Right ventricle myocardium superior (tissue), 1 donor: ENCODE measurements at regions of chr6 and their contacts with region 1.

Region 1: GRCh38 chr6:39302669-39303424 is 11.4 kb downstream of the KCNK17 start:
- DNase-seq: peak; percentile 91
- ATAC-seq: peak; percentile 96

Region 2: DNA sequence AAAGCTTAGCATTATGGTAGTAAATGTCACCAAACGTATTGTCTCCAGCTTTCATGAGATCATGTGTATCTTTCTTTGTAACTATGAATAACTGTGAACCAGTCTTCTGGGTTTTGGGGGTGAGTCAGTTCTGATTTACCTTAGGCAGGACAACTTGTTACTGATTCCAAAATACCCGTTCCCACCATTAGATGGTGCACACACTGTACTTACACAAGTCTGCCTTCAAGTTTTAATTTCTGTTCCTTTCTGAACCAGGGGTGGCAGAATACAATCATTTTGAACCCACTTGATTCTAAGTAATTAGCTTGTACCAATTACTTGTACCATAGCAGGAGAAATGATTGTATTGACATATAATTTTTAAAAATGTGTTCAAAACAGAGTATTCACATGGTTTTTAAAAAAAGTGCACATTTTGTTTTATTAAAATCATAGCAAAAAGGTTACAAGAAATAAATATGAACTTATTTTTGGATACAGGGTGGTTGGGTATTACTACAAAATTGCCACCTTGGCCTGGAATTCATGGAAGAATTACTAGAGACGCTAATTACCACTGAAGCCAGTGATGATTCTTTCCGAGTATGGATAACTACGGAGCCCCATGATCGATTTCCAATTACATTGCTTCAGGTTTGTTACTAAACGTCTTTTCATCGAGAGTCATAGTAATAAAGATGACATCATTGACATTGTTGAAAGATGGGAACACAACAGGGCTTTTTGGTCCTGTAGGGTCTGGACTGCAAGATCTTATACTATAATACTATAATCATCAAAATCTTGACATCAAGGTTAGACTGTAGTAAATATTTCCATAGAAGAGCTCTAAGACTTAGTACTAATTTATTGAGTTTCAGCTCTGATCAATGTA is 329.4 kb before region 1 on chr6:
- intact Hi-C with region 1: loop called (anchors 5 kb)
- DNase-seq: no peak
- ATAC-seq: peak; percentile 79

Region 3: DNA sequence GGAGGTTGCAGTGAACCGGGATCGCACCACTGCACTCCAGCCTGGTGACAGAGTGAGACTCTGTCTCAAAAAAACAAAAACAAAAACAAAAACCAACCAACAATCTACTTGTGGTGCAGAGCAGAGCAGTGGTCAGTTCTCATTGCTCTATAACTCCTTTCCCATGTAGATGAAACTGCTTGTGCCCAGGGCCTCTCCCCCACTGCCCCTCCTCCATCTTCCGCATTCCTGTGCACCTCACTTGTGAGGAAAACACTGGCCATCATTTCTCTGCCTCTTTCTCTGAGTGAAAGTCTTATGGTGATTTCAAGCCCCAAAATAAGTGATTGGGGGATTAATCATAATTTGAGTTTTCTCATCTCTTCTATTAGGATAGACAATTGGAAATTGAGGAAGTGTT is 318.1 kb before region 1 on chr6:
- intact Hi-C with region 1: no loop called
- DNase-seq: no peak
- ATAC-seq: no peak

Region 4: GRCh38 chr6:39166189-39166911 is 136.5 kb before region 1 on chr6:
- intact Hi-C with region 1: loop called (anchors 1 kb)
- DNase-seq: peak; percentile 86
- ATAC-seq: peak; percentile 85